Motor neuron (in vitro differentiated cells): ENCODE measurements at regions of chr1 and their contacts with region 1.

Region 1: GRCh38 chr1:94362466-94363058 is 55.6 kb upstream of the ABCD3 start:
- ATAC-seq: no peak
- H3K4me3 ChIP-seq: no peak overlapping the region
- H3K27ac ChIP-seq: no peak overlapping the region
- H3K4me1 ChIP-seq: no peaks in the 10 kb centered on the region

Region 2: GRCh38 chr1:94463765-94464330 is 101.3 kb after region 1 on chr1:
- in situ Hi-C with region 1: loop called in 1 of 9 experiments (anchors 25 kb)
- ATAC-seq: peak in 3 of 8 experiments; percentile 79 to 91 (median 86)
- H3K4me3 ChIP-seq: no peak overlapping the region
- H3K27ac ChIP-seq: no peak overlapping the region
- H3K4me1 ChIP-seq: no peaks in the 10 kb centered on the region

Region 3: GRCh38 chr1:94634977-94635416 is 272.4 kb after region 1 on chr1:
- in situ Hi-C with region 1: no loop called
- ATAC-seq: peak in 1 of 8 experiments; percentile 20
- H3K4me3 ChIP-seq: no peak overlapping the region
- H3K27ac ChIP-seq: no peak overlapping the region
- H3K4me1 ChIP-seq: no peaks in the 10 kb centered on the region